ENCODE measurements at regions of chr20 and their contacts with region 1.

Region 1: GRCh38 chr20:44692932-44693476 is 22.2 kb upstream of the CCN5 start:
- DNase-seq: peak; percentile 86 to 97
- H3K4me3 ChIP-seq: no peak overlapping the region
- H3K27ac ChIP-seq: peak overlapping the region; percentile 92 to 94
- H3K4me1 ChIP-seq: peaks cover 14 to 54% of the 10 kb centered on the region in 2 donors
- H3K27me3 ChIP-seq: no peaks in the 10 kb centered on the region
- CTCF ChIP-seq: no peak

Region 2: DNA sequence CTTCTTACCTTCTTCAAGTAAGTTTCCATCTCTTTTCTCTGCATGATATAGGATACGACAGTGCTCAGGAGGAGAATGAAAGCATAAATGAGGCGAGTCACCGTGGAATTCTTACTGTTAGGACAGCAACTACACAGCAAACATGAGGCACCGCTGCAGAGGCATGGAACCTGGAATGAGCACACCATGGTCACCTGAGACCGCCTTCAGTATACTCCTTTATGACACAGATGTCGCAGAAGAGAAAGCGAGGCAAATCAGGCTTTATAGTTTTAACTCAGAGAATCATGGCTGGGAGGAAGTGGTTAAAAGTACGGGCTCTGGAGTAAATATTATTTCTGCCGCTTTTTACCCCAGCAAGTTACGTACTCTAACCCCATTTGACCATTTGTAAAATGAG is 179.1 kb before region 1 on chr20:
- intact Hi-C with region 1: no loop called
- DNase-seq: no peak
- H3K4me3 ChIP-seq: no peak overlapping the region
- H3K27ac ChIP-seq: no peak overlapping the region
- H3K4me1 ChIP-seq: peaks cover 0 to 15% of the 10 kb centered on the region in 2 donors
- H3K27me3 ChIP-seq: no peaks in the 10 kb centered on the region
- CTCF ChIP-seq: no peak

Region 3: GRCh38 chr20:44664131-44664530 is 28.9 kb before region 1 on chr20:
- intact Hi-C with region 1: no loop called
- DNase-seq: no peak
- H3K4me3 ChIP-seq: no peak overlapping the region
- H3K27ac ChIP-seq: no peak overlapping the region
- H3K4me1 ChIP-seq: no peaks in the 10 kb centered on the region
- H3K27me3 ChIP-seq: no peaks in the 10 kb centered on the region
- CTCF ChIP-seq: no peak

Region 4: GRCh38 chr20:44706301-44707017 is 13.5 kb after region 1 on chr20:
- intact Hi-C with region 1: loop called (anchors 1 kb)
- DNase-seq: peak; percentile 69 to 94
- H3K4me3 ChIP-seq: no peak overlapping the region
- H3K27ac ChIP-seq: peak overlapping the region; percentile 87 to 93
- H3K4me1 ChIP-seq: peaks cover 13 to 40% of the 10 kb centered on the region in 2 donors
- H3K27me3 ChIP-seq: no peaks in the 10 kb centered on the region
- CTCF ChIP-seq: no peak

Region 5: DNA sequence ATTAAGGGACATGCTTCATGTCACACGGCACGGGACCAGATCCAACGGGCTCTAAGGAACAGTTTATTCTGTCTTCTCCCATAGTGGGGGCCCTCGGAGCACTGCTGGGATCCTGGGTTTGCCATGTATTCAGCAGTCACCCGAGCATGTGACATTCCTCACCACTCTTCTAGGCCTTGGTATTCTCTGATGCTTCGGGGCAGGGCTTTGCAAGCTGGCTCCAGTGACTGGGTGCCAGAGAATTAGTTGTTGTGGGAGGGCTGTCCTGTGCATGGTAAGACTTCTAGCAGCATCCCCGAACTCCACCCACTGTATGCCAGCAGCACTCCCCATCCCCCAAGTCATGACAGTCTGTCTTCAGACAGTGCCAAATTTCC is 27.6 kb after region 1 on chr20:
- intact Hi-C with region 1: loop called (anchors 2 kb)
- DNase-seq: peak in 1 of 2 donors; percentile 83
- H3K4me3 ChIP-seq: no peak overlapping the region
- H3K27ac ChIP-seq: peak overlapping the region; percentile 78 to 86
- H3K4me1 ChIP-seq: peaks cover 23 to 47% of the 10 kb centered on the region in 2 donors
- H3K27me3 ChIP-seq: no peaks in the 10 kb centered on the region
- CTCF ChIP-seq: no peak

Region 6: DNA sequence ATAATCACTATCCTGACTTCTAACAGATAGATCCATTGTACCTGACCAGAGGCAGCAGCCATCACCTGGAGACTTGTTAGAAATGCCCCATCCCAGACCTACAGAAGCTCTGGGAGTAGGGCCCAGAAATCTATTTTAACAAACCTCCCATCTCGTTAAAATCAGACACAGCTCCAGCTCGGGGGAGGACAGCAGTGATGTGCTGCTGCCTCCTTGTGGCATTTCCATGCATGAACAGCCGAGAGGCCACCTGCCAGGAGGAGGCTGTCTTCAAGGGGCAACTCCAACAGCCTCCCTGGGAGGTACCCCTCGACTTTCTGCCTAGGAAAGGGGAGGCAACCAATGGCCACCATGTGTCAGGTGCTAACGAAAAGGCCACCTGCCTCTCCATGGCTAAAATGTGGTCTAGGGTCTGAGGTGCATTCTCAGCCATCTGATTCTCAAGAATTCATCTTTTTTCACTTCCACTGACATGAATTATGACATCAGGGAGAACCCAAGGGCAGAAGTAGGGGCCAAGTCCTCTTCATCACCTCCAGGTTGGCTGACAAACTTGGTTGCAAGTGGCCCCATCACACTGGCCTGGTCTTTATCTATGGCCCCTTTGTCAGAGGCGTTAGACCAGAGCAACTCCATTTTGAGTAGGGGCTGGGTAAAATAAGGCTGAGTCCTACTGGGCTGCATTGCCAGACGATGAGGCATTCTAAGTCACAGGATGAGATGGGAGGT is 40.5 kb after region 1 on chr20:
- intact Hi-C with region 1: loop called (anchors 1 kb)
- DNase-seq: peak in 1 of 2 donors; percentile 90
- H3K4me3 ChIP-seq: no peak overlapping the region
- H3K27ac ChIP-seq: peak overlapping the region; percentile 80 to 93
- H3K4me1 ChIP-seq: peaks cover 11 to 54% of the 10 kb centered on the region in 2 donors
- H3K27me3 ChIP-seq: no peaks in the 10 kb centered on the region
- CTCF ChIP-seq: peak; percentile 94 to 96 (median 95)

Region 7: DNA sequence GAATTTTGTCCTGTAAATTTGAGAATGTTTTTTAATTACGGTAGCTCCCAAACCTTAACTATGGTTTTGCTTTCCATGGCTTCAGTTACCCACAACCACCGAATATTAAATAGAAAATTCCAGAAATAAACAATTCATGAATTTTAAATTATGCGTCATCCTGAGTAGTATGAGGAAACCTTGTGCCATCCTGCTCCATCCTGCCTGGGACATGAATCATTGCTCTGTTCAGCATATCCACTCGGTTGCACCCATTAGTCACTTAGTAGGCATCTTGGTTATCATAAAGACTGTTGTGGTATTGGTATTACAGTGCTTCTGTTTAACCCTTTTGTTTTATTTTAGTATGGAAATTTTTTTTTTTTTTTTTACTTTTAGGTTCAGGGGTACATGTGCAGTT is 368.2 kb after region 1 on chr20:
- intact Hi-C with region 1: no loop called
- DNase-seq: no peak
- H3K4me3 ChIP-seq: no peak overlapping the region
- H3K27ac ChIP-seq: no peak overlapping the region
- H3K4me1 ChIP-seq: no peaks in the 10 kb centered on the region
- H3K27me3 ChIP-seq: no peaks in the 10 kb centered on the region
- CTCF ChIP-seq: no peak

Measured in ascending aorta (tissue), 2 donors.